Activated CD4-positive, alpha-beta T cell treated with anti-CD3 and anti-CD28 coated beads, Interleukin-2, amount 10 ng/mL, durations not matched to agents 24 days and 14 days (primary cell): ENCODE measurements at regions of chr7 and their contacts with region 1.

Region 1: DNA sequence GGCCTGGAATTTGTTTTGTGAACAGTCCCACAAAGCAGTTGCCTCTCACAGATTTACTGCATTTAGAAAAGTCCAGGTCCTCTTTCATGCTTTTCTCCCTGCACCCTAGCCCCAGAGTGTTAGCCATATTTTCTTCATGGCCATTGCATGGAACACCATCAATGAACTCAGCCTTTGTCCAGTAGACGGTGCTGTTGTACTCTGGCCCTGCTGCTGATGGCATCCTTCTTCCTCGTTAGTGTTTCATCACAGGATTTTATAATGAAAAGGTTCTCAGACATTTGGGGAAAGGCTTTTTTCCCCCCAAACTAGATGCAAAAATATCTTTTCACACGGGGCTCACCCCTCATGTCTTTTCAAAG is 93.0 kb upstream of the SLC25A13 start:
- DNase-seq: peak; percentile 88
- H3K4me3 Mint-ChIP-seq: no peak overlapping the region
- H3K27ac Mint-ChIP-seq: no peak overlapping the region
- H3K4me1 Mint-ChIP-seq: peaks cover 3% of the 10 kb centered on the region
- H3K27me3 Mint-ChIP-seq: peaks cover 18% of the 10 kb centered on the region

Region 2: GRCh38 chr7:96508371-96508770 is 93.5 kb after region 1 on chr7:
- intact Hi-C with region 1: loop called (anchors 10 kb)
- DNase-seq: no peak
- H3K4me3 Mint-ChIP-seq: no peak overlapping the region
- H3K27ac Mint-ChIP-seq: no peak overlapping the region
- H3K4me1 Mint-ChIP-seq: no peaks in the 10 kb centered on the region
- H3K27me3 Mint-ChIP-seq: peaks cover 23% of the 10 kb centered on the region

Region 3: DNA sequence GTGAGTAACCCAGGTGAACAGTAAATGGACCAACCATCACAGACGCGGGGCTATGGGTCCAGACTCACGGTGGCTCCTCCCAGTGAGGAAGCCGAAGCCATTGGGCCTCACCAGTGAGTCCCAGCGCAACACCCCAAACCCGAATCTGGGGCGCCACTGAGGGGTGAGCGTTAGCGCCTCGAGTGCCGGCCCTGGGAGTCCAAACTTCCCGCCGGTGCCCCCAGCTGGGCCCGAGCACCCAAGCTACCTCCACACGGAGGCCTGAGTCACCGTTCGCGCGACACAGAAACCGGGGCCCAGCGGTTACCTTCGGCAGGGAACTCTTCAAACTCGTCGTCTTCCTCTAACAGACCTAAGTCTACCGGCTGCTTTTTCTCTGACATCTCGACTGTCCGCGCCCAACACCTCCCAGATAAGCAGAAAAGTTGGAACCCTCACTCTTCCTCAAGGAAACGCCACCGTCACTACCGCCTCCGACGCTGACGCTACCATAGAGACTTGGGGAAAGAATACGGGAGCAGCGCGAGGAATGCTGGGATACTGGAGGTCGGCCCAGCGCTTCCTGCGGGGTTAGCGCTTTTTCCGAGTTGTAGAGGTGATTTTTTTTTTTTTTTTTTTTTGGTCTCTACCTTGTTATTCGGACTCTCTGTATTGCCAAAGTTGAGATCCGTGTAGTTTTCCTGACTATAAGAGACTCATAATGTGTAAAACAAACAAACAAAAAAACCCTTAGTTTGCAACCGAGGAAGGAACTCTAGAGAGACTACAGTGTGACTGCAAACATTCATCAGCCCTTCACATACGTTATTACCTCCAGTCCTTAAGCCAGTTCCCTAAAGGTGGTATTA is 294.7 kb after region 1 on chr7 and contains the start of gene SEM1:
- intact Hi-C with region 1: loop called (anchors 10 kb)
- DNase-seq: peak; percentile 88
- H3K4me3 Mint-ChIP-seq: peak within 1 kb of the TSS; percentile 95
- H3K27ac Mint-ChIP-seq: peak within 1 kb of the TSS; percentile 97
- H3K4me1 Mint-ChIP-seq: peaks cover 20% of the 10 kb centered on the region
- H3K27me3 Mint-ChIP-seq: peaks cover 1% of the 10 kb centered on the region
- total RNA-seq, gene SEM1: 41.5 and 43.8 TPM in 2 replicates